ENCODE measurements at regions of chr17 and their contacts with region 1.

Region 1: DNA sequence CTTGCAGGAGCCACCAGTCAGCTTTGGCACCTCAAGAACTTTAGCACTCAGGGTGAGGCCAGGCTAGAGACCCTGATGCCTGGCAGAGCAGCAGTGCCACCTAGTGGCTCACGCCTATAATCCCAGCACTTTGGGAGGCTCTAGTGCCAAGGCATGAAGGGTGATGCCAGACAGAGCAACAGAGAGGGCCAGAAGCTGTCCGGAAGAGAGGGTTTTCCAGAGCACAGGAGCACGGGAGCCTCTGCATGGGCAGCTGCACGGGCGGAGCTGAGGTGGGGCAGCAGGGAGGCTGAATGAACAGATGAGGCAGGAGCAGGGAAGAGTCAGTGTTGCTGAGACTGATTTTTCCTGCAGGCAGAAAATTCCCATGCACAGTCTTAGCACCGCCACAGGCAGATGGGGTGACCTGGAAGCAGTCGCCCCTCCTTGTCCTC is 38.9 kb downstream of the MYH3 start:
- DNase-seq: peak in 1 of 2 donors; percentile 70
- H3K4me3 ChIP-seq: no peak overlapping the region
- H3K27ac ChIP-seq: no peak overlapping the region
- H3K4me1 ChIP-seq: no peaks in the 10 kb centered on the region
- H3K27me3 ChIP-seq: no peaks in the 10 kb centered on the region
- CTCF ChIP-seq: peak; percentile 41 to 83 (median 63)

Region 2: GRCh38 chr17:9924735-9925191 is 693.5 kb before region 1 on chr17:
- intact Hi-C with region 1: loop called (anchors 1 kb)
- DNase-seq: no peak
- H3K4me3 ChIP-seq: no peak overlapping the region
- H3K27ac ChIP-seq: no peak overlapping the region
- H3K4me1 ChIP-seq: no peaks in the 10 kb centered on the region
- H3K27me3 ChIP-seq: no peaks in the 10 kb centered on the region
- CTCF ChIP-seq: peak; percentile 76 to 86 (median 81)

Region 3: GRCh38 chr17:10527419-10527818 is 90.8 kb before region 1 on chr17:
- intact Hi-C with region 1: no loop called
- DNase-seq: no peak
- H3K4me3 ChIP-seq: no peak overlapping the region
- H3K27ac ChIP-seq: no peak overlapping the region
- H3K4me1 ChIP-seq: no peaks in the 10 kb centered on the region
- H3K27me3 ChIP-seq: no peaks in the 10 kb centered on the region
- CTCF ChIP-seq: no peak

Measured in ascending aorta (tissue), 2 donors.